AG04450 (cell line): ENCODE measurements at regions of chr22 and their contacts with region 1.

Region 1: GRCh38 chr22:18947905-18948304 is 11.8 kb upstream of the PRODH start:
- DNase-seq: no peak
- H3K4me3 ChIP-seq: no peak overlapping the region
- H3K27ac ChIP-seq: no peak overlapping the region
- H3K27me3 ChIP-seq: peaks cover 17% of the 10 kb centered on the region
- CTCF ChIP-seq: no peak

Region 2: DNA sequence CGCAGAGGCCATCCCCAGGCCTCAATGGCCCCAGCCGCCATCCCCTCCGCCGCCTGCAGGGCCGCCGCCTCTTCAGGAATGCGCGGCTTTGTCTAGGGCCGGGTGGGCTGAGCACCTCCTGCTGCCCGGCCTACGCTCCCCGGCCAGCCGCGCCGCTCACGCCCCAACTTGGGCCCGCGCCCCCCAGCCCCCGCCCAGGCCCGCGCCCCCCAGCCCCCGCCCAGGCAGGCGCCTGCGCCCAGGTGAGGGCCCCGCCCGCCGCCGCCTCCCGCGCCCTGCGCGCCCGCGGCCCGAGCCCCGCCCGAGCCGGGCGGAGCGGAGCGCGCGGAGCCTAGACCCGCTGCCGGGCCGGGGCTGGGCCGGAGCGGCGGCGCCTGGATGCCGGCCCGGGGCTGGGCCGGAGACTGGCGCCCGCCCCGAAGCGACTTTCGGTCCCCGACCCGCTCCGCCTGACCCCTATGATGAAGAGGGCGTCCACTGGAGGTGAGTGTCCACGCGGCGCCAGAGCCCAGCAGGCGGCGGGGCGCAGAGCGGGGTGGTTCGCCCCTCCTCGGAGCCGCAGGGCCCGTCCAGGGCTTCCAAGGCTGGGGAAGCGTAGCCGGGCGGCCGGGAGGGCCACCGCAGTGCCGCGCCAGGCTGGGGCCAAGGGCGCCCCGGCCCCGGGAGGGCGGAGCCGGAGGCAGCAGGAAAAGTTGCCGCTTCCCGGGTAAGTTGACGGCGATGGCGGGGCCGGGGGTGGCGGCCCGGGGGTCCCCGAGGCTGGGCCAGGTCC is 22.5 kb after region 1 on chr22:
- CTCF ChIA-PET with region 1: no interaction called
- POLR2A ChIA-PET with region 1: no interaction called
- DNase-seq: no peak
- H3K4me3 ChIP-seq: no peak overlapping the region
- H3K27ac ChIP-seq: no peak overlapping the region
- H3K27me3 ChIP-seq: peaks cover 15% of the 10 kb centered on the region
- CTCF ChIP-seq: no peak

Region 3: GRCh38 chr22:19361501-19362103 is 413.7 kb after region 1 on chr22:
- CTCF ChIA-PET with region 1: interaction called, 10 read pairs
- POLR2A ChIA-PET with region 1: no interaction called
- DNase-seq: no peak
- H3K4me3 ChIP-seq: no peak overlapping the region
- H3K27ac ChIP-seq: no peak overlapping the region
- H3K27me3 ChIP-seq: no peaks in the 10 kb centered on the region
- CTCF ChIP-seq: no peak